Lower leg skin (tissue), 4 donors: ENCODE measurements at regions of chr14 and their contacts with region 1.

Region 1: GRCh38 chr14:80996049-80996901 is 40.9 kb downstream of the TSHR start:
- DNase-seq: peak in 1 of 2 donors; percentile 33
- H3K4me3 ChIP-seq: no peak overlapping the region
- CTCF ChIP-seq: no peak
- POLR2A ChIP-seq: no peak

Region 2: GRCh38 chr14:81170104-81170828 is 174.0 kb after region 1 on chr14:
- intact Hi-C with region 1: loop called (anchors 10 kb)
- DNase-seq: peak; percentile 92 to 98
- H3K4me3 ChIP-seq: peak overlapping the region; percentile 52
- CTCF ChIP-seq: peak in 1 of 3 donors; percentile 37
- POLR2A ChIP-seq: peak in 1 of 2 donors; percentile 64